ENCODE measurements at regions of chr10 and their contacts with region 1.

Region 1: GRCh38 chr10:102764389-102765178 is 20.8 kb downstream of the WBP1L start:
- DNase-seq: no peak
- H3K4me3 Mint-ChIP-seq: no peak overlapping the region
- H3K27ac Mint-ChIP-seq: no peak overlapping the region
- H3K4me1 Mint-ChIP-seq: peaks cover 28% of the 10 kb centered on the region
- H3K27me3 Mint-ChIP-seq: no peaks in the 10 kb centered on the region

Region 2: DNA sequence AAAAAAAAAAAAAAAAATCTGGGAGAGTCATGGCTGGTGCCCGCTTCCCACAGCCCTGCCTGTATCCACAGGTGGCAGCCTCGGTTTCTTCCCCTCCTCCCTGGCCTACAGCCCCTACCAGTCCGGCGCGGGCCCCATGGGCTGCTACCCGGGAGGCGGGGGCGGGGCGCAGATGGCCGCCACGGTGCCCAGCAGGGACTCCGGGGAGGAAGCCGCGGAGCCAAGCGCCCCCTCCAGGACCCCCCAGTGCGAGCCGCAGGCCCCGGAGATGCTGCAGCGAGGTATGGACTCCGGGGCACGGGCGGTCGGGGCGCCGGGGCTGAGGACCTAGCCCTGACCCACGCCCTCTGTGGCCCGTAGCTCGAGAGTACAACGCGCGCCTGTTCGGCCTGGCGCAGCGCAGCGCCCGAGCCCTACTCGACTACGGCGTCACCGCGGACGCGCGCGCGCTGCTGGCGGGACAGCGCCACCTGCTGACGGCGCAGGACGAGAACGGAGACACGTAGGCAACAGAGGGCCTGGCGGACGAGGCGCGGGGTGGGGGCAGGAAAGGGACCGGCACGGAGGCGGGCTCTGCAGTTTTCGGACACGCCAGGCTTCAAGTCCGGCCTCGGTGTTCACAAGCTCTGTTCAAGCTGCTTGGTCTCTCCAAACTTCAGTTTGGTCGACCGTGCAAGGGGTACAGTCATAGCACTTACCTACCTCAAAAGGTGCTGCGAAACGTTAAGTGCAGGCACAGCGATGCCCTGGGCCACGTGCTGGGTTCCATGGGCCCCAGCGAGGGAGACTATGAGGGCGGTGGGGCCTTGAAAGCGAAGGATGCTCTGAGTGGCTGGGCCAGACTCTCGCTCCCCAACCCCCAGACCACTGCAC is 365.1 kb before region 1 on chr10:
- intact Hi-C with region 1: no loop called
- DNase-seq: peak; percentile 86
- H3K4me3 Mint-ChIP-seq: peak overlapping the region; percentile 90
- H3K27ac Mint-ChIP-seq: peak overlapping the region; percentile 63
- H3K4me1 Mint-ChIP-seq: peaks cover 42% of the 10 kb centered on the region
- H3K27me3 Mint-ChIP-seq: no peaks in the 10 kb centered on the region

Region 3: DNA sequence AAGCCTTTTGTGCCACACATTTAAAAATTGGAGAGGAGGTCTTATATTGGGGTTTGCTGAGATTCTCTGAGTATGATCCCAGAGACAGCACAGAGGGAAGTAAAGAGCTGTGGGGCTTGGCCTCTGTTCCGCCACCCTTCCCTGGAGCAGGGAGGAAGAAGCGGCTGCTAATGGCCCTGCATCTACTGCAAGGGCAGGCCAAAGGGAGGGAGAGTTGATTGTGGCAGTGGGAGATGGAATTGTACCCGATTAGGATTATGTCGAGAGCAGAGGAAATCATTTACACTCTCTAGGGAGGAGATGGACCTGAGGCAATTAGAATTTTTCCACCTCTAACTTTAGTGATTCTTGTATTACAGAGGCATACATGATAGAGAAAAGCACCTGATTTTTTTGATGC is 43.8 kb after region 1 on chr10:
- intact Hi-C with region 1: loop called (anchors 5 kb)
- DNase-seq: no peak
- H3K4me3 Mint-ChIP-seq: no peak overlapping the region
- H3K27ac Mint-ChIP-seq: no peak overlapping the region
- H3K4me1 Mint-ChIP-seq: peaks cover 32% of the 10 kb centered on the region
- H3K27me3 Mint-ChIP-seq: no peaks in the 10 kb centered on the region

Region 4: GRCh38 chr10:103053659-103054581 is 289.3 kb after region 1 on chr10:
- intact Hi-C with region 1: no loop called
- DNase-seq: peak; percentile 69
- H3K4me3 Mint-ChIP-seq: peak overlapping the region; percentile 83
- H3K27ac Mint-ChIP-seq: peak overlapping the region; percentile 92
- H3K4me1 Mint-ChIP-seq: peaks cover 25% of the 10 kb centered on the region
- H3K27me3 Mint-ChIP-seq: no peaks in the 10 kb centered on the region